ENCODE measurements at regions of chr13 and their contacts with region 1.

Region 1: DNA sequence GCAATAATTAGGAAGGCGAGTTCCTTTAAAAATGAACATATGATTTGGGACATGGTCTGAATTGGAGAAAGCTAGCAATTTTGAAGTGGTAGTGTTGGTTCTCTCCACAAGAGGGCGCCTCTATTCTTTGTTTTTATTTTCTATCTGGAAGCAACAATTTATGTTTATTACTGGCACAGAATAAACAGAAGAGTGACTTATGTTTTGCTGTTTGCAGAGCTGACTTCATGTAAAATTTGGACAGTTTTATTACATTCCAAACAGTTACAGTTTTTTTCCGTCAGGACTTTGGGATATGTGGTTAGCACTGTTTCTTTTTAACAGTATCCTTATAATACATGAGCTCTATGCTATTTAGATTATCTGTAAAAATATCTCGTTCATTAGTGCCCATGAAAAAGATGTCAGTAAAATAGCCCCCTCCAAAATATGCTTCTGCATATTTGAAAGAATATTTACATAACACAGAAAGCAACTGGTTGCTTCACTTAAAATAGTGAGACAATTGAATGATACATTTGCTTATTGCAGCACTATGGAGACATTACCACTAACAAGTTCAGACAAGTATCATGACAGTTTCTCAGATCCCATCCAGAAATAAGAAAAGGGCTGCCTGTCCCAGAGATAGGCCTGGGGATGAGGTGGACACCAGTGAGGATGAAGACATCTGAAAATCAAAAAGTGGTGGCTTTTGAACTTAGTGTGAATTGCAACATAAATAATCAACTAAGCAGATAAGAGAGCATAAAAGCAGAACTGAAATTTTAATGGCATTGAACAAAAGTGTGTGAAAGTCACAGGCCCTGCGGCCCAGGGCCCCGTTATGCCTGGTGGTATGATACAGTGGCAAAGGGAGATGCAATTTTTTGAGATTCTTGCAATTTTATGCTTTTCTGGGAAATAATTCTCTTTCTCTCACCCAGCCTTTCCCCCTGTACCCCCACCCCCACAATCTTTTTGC is 32.3 kb upstream of the FGF9 start:
- DNase-seq: no peak
- ATAC-seq: no peak
- H3K4me3 ChIP-seq: no peak overlapping the region
- H3K27ac ChIP-seq: no peak overlapping the region; the same call in 1 of the 2 replicates
- H3K4me1 ChIP-seq: peaks cover 17 to 20% of the 10 kb centered on the region in 2 experiments
- H3K27me3 ChIP-seq: no peaks in the 10 kb centered on the region
- CTCF ChIP-seq: peak; percentile 37 to 89 (median 60); a peak in 5 of 6 replicates
- POLR2A ChIP-seq: no peak
- RAD21 ChIP-seq: peak; percentile 62

Region 2: DNA sequence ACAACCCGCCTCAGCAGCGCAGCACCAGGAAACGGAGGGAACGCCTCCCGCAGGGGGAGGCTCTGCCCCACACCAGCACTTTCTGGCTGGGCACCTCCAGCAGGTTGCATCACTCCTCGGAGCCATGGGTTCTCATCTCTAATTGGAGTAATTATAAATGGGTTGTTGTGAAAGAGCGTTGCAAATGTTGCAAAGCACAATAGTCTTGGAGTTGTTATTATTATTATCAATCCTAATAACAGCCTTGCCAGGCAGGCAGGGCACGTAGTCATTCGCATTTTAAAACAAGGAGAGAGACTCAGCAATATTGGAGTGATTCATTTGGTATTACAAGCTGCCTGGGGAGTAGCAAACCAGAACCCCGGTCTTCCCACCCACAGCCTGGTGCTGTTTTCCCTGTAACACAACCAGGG is 1297.8 kb before region 1 on chr13:
- CTCF ChIA-PET with region 1: no interaction called
- POLR2A ChIA-PET with region 1: no interaction called
- RAD21 ChIA-PET with region 1: no interaction called
- intact Hi-C with region 1: no loop called
- DNase-seq: no peak
- ATAC-seq: no peak
- H3K4me3 ChIP-seq: no peak overlapping the region
- H3K27ac ChIP-seq: no peak overlapping the region
- H3K4me1 ChIP-seq: peaks cover 0 to 7% of the 10 kb centered on the region in 2 experiments; a peak in 2 of 4 replicates
- H3K27me3 ChIP-seq: no peaks in the 10 kb centered on the region
- CTCF ChIP-seq: no peak
- POLR2A ChIP-seq: no peak
- RAD21 ChIP-seq: no peak

Region 3: GRCh38 chr13:21625366-21625765 is 13.2 kb before region 1 on chr13:
- CTCF ChIA-PET with region 1: interaction called, 12 read pairs
- POLR2A ChIA-PET with region 1: interaction called, 4 read pairs
- RAD21 ChIA-PET with region 1: interaction called in 1 of 2 experiments, 3 read pairs
- intact Hi-C with region 1: no loop called
- DNase-seq: peak; percentile 59
- ATAC-seq: peak; percentile 94
- H3K4me3 ChIP-seq: no peak overlapping the region
- H3K27ac ChIP-seq: no peak overlapping the region
- H3K4me1 ChIP-seq: peaks cover 0 to 3% of the 10 kb centered on the region in 2 experiments; a peak in 1 of 4 replicates
- H3K27me3 ChIP-seq: no peaks in the 10 kb centered on the region
- CTCF ChIP-seq: peak; percentile 37 to 77 (median 68); a peak in 5 of 6 replicates
- POLR2A ChIP-seq: no peak
- RAD21 ChIP-seq: peak; percentile 75

Region 4: GRCh38 chr13:21670883-21671619 is 32.5 kb after region 1 on chr13 and contains the start of gene FGF9:
- CTCF ChIA-PET with region 1: interaction called, 9 read pairs
- POLR2A ChIA-PET with region 1: interaction called, 4 read pairs
- RAD21 ChIA-PET with region 1: interaction called in 1 of 2 experiments, 6 read pairs
- intact Hi-C with region 1: loop called (anchors 2 kb)
- DNase-seq: peak; percentile 75
- ATAC-seq: peak; percentile 73
- H3K4me3 ChIP-seq: peak within 1 kb of the TSS; percentile 47 to 68
- H3K27ac ChIP-seq: peak within 1 kb of the TSS; percentile 67
- H3K4me1 ChIP-seq: peaks cover 30 to 59% of the 10 kb centered on the region in 2 experiments
- H3K27me3 ChIP-seq: peaks cover 23% of the 10 kb centered on the region; the same call in 1 of the 2 replicates
- CTCF ChIP-seq: peak in 1 of 3 experiments; percentile 9; a peak in 1 of 6 replicates
- POLR2A ChIP-seq: peak; percentile 49
- RAD21 ChIP-seq: no peak
- total RNA-seq, gene FGF9: 1.5 TPM

Region 5: GRCh38 chr13:22198001-22198400 is 559.4 kb after region 1 on chr13:
- CTCF ChIA-PET with region 1: no interaction called
- POLR2A ChIA-PET with region 1: no interaction called
- RAD21 ChIA-PET with region 1: no interaction called
- intact Hi-C with region 1: loop called (anchors 10 kb)
- DNase-seq: no peak
- ATAC-seq: no peak
- H3K4me3 ChIP-seq: no peak overlapping the region
- H3K27ac ChIP-seq: no peak overlapping the region
- H3K4me1 ChIP-seq: no peaks in the 10 kb centered on the region
- H3K27me3 ChIP-seq: no peaks in the 10 kb centered on the region
- CTCF ChIP-seq: no peak
- POLR2A ChIP-seq: no peak
- RAD21 ChIP-seq: no peak

Region 6: DNA sequence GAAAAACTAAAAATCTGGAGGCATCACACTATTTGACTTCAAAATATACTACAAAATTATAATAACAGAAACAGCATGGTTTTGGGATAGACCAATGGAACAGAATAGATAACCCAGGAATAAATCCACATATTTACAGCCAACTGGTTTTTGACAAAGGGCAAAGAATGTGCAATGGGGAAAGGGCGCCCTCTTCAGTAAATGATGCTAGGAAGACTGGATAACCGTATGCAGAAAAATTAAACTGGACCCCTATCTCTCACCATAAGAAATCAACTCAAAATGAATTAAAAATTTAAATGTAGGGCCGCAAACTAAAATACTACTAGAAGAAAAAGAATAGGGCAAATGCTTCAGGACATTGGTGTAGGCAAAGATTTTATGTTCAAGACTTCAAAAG is 1101.7 kb after region 1 on chr13:
- CTCF ChIA-PET with region 1: interaction called, 4 read pairs
- POLR2A ChIA-PET with region 1: no interaction called
- RAD21 ChIA-PET with region 1: no interaction called
- intact Hi-C with region 1: loop called (anchors 5 kb)
- DNase-seq: no peak
- ATAC-seq: no peak
- H3K4me3 ChIP-seq: no peak overlapping the region
- H3K27ac ChIP-seq: no peak overlapping the region
- H3K4me1 ChIP-seq: peaks cover 0 to 8% of the 10 kb centered on the region in 2 experiments; a peak in 3 of 4 replicates
- H3K27me3 ChIP-seq: no peaks in the 10 kb centered on the region
- CTCF ChIP-seq: peak; percentile 16 to 71 (median 64); a peak in 5 of 6 replicates
- POLR2A ChIP-seq: no peak
- RAD21 ChIP-seq: peak; percentile 46

Region 7: DNA sequence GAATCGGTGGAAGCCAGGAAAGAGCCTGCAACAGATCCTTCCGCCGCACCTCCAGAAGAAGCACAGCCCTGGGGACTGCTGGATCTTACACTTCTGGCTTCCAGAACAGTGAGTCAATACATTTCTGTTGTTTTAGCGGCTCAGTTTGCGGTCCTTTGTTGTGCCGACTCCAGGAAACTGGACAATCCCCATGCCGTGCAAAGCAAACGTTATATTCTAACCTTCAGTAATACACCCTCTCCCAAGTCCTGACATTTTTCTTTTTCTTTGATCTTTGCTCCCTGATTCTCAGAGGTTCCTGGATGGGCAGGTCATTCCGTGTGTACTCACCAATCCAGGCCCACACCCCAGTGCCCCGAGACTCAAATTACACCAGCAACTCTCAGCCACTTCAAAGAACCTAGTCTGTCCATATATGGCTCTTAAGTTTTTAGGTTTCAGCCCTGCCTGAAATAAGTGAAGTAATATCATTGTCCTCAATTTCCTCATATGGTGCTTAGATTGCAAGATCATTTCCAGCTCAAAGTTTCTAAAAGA is 1155.1 kb after region 1 on chr13:
- CTCF ChIA-PET with region 1: interaction called, 13 read pairs
- POLR2A ChIA-PET with region 1: interaction called, 3 read pairs
- RAD21 ChIA-PET with region 1: interaction called in 1 of 2 experiments, 4 read pairs
- intact Hi-C with region 1: loop called (anchors 5 kb)
- DNase-seq: peak; percentile 84
- ATAC-seq: peak; percentile 78
- H3K4me3 ChIP-seq: peak overlapping the region; percentile 24 to 44
- H3K27ac ChIP-seq: peak overlapping the region; percentile 87
- H3K4me1 ChIP-seq: peaks cover 45 to 71% of the 10 kb centered on the region in 2 experiments
- H3K27me3 ChIP-seq: no peaks in the 10 kb centered on the region
- CTCF ChIP-seq: no peak
- POLR2A ChIP-seq: no peak
- RAD21 ChIP-seq: no peak

Measured in HCT116 (cell line).